ENCODE measurements at regions of chr6 and their contacts with region 1.

Region 1: GRCh38 chr6:227074-227782 is 65.1 kb upstream of the DUSP22 start:
- DNase-seq: peak; percentile 61
- ATAC-seq: no peak
- H3K4me3 Mint-ChIP-seq: no peak overlapping the region
- H3K27ac Mint-ChIP-seq: peak overlapping the region; percentile 52
- H3K4me1 Mint-ChIP-seq: peaks cover 70% of the 10 kb centered on the region
- H3K27me3 Mint-ChIP-seq: peaks cover 2% of the 10 kb centered on the region

Region 2: DNA sequence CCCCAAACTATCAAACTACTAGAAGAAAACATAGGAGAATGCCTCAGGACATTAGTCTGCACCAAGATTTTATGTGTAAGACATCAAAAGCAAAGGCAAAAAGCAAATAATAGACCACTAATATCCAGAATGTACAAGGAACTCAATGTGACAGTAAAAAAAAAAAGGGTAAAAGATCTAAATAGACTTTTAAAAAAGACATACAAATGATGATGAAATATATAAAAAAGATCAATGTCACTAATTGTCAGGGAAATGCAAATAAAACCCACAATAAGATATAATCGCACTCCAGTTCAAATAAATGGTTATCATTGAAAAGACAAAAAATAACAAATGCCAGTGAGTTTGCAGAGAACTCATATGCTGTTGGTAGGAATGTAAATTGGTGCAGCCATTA is 53.2 kb before region 1 on chr6:
- CTCF ChIA-PET with region 1: no interaction called
- POLR2A ChIA-PET with region 1: no interaction called
- intact Hi-C with region 1: no loop called
- DNase-seq: no peak
- ATAC-seq: no peak
- H3K4me3 Mint-ChIP-seq: no peak overlapping the region
- H3K27ac Mint-ChIP-seq: no peak overlapping the region
- H3K4me1 Mint-ChIP-seq: peaks cover 6% of the 10 kb centered on the region
- H3K27me3 Mint-ChIP-seq: peaks cover 7% of the 10 kb centered on the region

Region 3: DNA sequence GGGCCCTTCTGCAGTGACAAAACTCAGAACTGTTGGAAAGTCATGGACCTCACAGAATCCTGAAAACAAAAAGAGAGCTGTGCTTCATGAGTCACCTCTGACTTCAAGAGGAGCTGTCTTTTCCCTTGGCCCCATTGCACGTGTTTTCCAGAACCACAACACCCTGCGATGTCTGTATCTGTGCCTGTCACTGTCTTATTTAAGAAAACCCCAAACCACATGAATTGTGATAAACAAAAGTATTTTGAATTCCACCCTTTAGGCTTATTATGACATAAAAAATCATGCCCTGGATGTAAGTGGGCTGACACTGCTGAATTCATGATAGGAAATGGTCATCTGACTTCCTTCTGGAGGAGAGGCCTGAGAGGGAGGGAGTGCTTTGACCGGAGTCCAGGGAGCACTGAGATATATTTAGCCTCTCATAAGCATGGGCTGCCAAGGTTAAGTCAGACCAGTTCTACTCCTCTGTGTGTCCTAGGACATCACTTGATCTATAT is 31.3 kb before region 1 on chr6:
- CTCF ChIA-PET with region 1: interaction called, 8 read pairs
- POLR2A ChIA-PET with region 1: interaction called, 5 read pairs
- intact Hi-C with region 1: loop called (anchors 1 kb)
- DNase-seq: peak; percentile 84
- ATAC-seq: peak; percentile 45
- H3K4me3 Mint-ChIP-seq: no peak overlapping the region
- H3K27ac Mint-ChIP-seq: no peak overlapping the region
- H3K4me1 Mint-ChIP-seq: peaks cover 54% of the 10 kb centered on the region
- H3K27me3 Mint-ChIP-seq: no peaks in the 10 kb centered on the region

Region 4: DNA sequence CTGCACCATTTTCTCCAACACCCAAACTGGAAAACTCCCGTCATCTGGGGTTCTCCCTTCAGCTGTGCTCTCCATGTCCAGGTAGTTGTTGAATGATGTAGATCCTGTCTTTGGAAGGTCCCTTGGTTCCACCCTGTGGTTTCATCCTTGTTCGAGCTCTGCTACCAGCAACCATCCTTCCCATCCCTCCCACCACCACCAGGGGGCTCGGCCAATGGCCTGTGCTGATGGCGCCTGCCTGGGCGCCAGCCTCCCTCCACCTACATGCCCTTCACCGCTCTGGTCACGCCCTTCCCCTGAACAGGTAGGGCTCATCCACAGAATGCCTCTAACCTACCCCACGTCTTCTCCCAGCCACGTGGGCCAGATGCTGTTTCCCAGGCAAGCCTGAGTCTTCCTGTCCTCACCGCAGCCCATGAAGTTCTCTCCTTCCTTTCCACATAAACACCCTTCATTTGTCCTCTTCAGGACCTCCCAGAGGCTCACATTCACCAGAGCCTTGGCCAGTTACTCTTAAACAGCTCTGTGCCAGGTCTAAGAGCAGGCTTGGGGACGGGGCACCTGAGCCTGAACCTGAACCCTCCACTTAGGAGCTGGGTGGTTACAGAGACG is 10.1 kb before region 1 on chr6:
- CTCF ChIA-PET with region 1: interaction called, 10 read pairs
- POLR2A ChIA-PET with region 1: interaction called, 11 read pairs
- intact Hi-C with region 1: loop called (anchors 1 kb)
- DNase-seq: peak; percentile 68
- ATAC-seq: no peak
- H3K4me3 Mint-ChIP-seq: no peak overlapping the region
- H3K27ac Mint-ChIP-seq: peak overlapping the region; percentile 41
- H3K4me1 Mint-ChIP-seq: peaks cover 59% of the 10 kb centered on the region
- H3K27me3 Mint-ChIP-seq: peaks cover 11% of the 10 kb centered on the region

Region 5: GRCh38 chr6:273551-274058 is 46.4 kb after region 1 on chr6:
- CTCF ChIA-PET with region 1: no interaction called
- POLR2A ChIA-PET with region 1: no interaction called
- intact Hi-C with region 1: loop called in 1 of 2 experiments (anchors 1 kb)
- DNase-seq: no peak
- ATAC-seq: no peak
- H3K4me3 Mint-ChIP-seq: no peak overlapping the region
- H3K27ac Mint-ChIP-seq: no peak overlapping the region
- H3K4me1 Mint-ChIP-seq: peaks cover 24% of the 10 kb centered on the region
- H3K27me3 Mint-ChIP-seq: no peaks in the 10 kb centered on the region

Region 6: GRCh38 chr6:336159-337019 is 109.2 kb after region 1 on chr6:
- CTCF ChIA-PET with region 1: no interaction called
- POLR2A ChIA-PET with region 1: interaction called, 4 read pairs
- intact Hi-C with region 1: loop called in 1 of 2 experiments (anchors 5 kb)
- DNase-seq: no peak
- ATAC-seq: peak; percentile 30
- H3K4me3 Mint-ChIP-seq: no peak overlapping the region
- H3K27ac Mint-ChIP-seq: no peak overlapping the region
- H3K4me1 Mint-ChIP-seq: peaks cover 48% of the 10 kb centered on the region
- H3K27me3 Mint-ChIP-seq: no peaks in the 10 kb centered on the region

Region 7: GRCh38 chr6:411421-412145 is 184.4 kb after region 1 on chr6:
- CTCF ChIA-PET with region 1: no interaction called
- POLR2A ChIA-PET with region 1: no interaction called
- intact Hi-C with region 1: no loop called
- DNase-seq: no peak
- ATAC-seq: peak; percentile 3
- H3K4me3 Mint-ChIP-seq: peak overlapping the region; percentile 11
- H3K27ac Mint-ChIP-seq: peak overlapping the region; percentile 44
- H3K4me1 Mint-ChIP-seq: peaks cover 53% of the 10 kb centered on the region
- H3K27me3 Mint-ChIP-seq: no peaks in the 10 kb centered on the region

Region 8: GRCh38 chr6:548517-548916 is 321.3 kb after region 1 on chr6:
- CTCF ChIA-PET with region 1: no interaction called
- POLR2A ChIA-PET with region 1: no interaction called
- intact Hi-C with region 1: loop called in 1 of 2 experiments (anchors 2 kb)
- DNase-seq: peak; percentile 75
- ATAC-seq: peak; percentile 90
- H3K4me3 Mint-ChIP-seq: peak overlapping the region; percentile 57
- H3K27ac Mint-ChIP-seq: peak overlapping the region; percentile 92
- H3K4me1 Mint-ChIP-seq: peaks cover 70% of the 10 kb centered on the region
- H3K27me3 Mint-ChIP-seq: no peaks in the 10 kb centered on the region